Activated naive CD4-positive, alpha-beta T cell treated with anti-CD3 and anti-CD28 coated beads for 36 hours (primary cell): ENCODE measurements at regions of chr5 and their contacts with region 1.

Region 1: DNA sequence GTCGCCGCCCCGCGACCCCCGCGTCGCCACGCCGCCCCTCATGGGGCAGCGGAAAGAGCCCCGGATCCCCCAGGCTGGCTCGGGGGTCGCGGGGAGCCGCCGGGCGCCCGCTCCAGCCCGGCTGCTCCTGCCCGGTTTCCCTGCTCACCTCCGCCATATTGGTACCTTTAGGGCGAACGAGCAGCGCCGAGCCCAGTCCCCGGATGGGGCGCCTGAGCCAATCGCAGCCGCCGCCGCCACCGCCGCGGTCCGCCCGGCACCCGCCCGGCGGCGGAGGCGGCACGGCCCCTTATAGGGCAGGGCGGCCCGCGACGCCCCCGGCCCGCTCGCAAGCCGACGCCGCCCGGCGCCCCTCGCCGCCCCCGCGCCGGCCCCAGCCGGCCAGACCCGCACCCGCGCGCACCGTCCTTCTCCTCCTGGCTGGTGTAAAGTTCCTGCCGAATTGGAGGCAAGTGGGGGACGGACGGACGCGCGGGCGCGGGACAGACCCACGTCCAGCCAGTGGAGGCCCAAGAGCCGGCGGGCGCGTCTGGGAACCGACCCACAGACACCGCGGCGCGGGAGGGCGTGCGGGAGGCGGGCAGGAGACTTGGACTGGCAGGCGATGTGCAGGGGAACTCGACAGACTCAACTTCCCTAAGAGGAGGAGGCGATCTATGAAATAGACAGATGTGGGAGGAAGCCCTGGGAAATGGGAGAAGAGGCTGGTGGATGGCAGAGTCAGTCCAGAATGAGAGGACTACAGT is at the start of gene MIER3:
- DNase-seq: peak; percentile 83
- H3K4me3 Mint-ChIP-seq: peak within 1 kb of the TSS; percentile 85
- H3K27ac Mint-ChIP-seq: peak within 1 kb of the TSS; percentile 9
- H3K4me1 Mint-ChIP-seq: peaks cover 20% of the 10 kb centered on the region
- H3K27me3 Mint-ChIP-seq: peaks cover 10% of the 10 kb centered on the region
- total RNA-seq, gene MIER3: 11.1 to 12.3 TPM

Region 2: DNA sequence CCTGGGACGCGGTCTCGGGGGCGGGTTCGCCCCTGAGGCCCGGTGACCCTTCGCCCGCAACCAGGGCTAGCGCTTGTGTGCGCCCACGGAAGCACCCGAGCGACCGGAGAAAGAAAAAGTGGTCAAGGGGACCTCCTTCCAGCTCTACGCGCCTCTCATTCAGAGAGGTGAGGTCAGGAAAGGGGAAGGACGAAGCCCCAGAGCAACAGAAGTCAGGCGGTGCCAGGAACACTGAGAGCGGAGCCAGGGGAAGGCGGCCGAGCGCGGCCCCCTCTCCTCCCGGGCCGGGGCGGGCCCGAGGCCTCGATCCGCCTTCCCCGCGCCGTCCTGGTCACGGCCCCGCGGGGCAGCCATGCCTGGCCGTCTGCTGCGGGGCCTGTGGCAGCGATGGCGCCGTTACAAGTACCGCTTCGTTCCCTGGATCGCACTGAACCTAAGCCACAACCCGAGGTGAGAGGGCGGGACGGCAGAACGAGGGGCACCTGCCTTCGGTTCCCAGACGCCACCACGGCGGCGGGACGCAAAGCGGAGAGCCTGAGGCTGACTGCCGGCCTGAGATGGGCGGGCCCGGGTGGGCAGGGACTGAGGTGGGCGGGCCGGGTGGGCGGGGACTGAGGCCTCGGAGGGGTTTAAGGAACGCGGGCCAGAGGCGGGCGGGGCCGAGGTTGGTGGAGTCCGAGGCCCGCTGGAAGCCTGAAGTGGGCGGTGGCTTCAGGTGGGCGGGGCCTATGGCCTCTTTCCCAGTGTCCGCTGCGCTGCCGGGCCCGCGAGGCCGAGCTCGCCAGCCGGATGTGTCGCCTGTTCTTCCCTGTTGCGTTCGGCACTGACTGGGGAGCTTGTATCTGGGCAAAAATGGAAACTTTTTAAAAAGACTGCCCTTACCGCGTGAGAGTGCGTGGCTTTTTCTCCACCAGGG is 42.6 kb before region 1 on chr5 and contains the start of gene SETD9:
- CTCF ChIA-PET with region 1: no interaction called
- intact Hi-C with region 1: loop called (anchors 1 kb)
- DNase-seq: peak; percentile 97
- H3K4me3 Mint-ChIP-seq: peak within 1 kb of the TSS; percentile 81
- H3K27ac Mint-ChIP-seq: peak within 1 kb of the TSS; percentile 94
- H3K4me1 Mint-ChIP-seq: peaks cover 19% of the 10 kb centered on the region
- H3K27me3 Mint-ChIP-seq: no peaks in the 10 kb centered on the region
- total RNA-seq, gene SETD9: 5.8 to 8.6 TPM

Region 3: GRCh38 chr5:57539281-57539701 is 587.2 kb after region 1 on chr5:
- CTCF ChIA-PET with region 1: no interaction called
- intact Hi-C with region 1: no loop called
- DNase-seq: no peak
- H3K4me3 Mint-ChIP-seq: no peak overlapping the region
- H3K27ac Mint-ChIP-seq: no peak overlapping the region
- H3K4me1 Mint-ChIP-seq: peaks cover 2% of the 10 kb centered on the region
- H3K27me3 Mint-ChIP-seq: peaks cover 6% of the 10 kb centered on the region